ENCODE measurements at regions of chr11 and their contacts with region 1.

Region 1: GRCh38 chr11:17827006-17827405 is 92.4 kb downstream of the KCNC1 start:
- DNase-seq: no peak
- ATAC-seq: no peak

Region 2: GRCh38 chr11:17760102-17761029 is 66.6 kb before region 1 on chr11:
- intact Hi-C with region 1: loop called (anchors 2 kb)
- DNase-seq: peak; percentile 61
- ATAC-seq: peak; percentile 93

Measured in Right ventricle myocardium superior (tissue), 1 donor.